HCT116 (cell line): ENCODE measurements at regions of chr22 and their contacts with region 1.

Region 1: GRCh38 chr22:41697126-41697775 is 2.1 kb upstream of the MEI1 start:
- DNase-seq: peak; percentile 68
- ATAC-seq: peak; percentile 91
- H3K4me3 ChIP-seq: no peak overlapping the region
- H3K27ac ChIP-seq: peak overlapping the region; percentile 45
- H3K4me1 ChIP-seq: peaks cover 3 to 12% of the 10 kb centered on the region in 2 experiments
- H3K27me3 ChIP-seq: no peaks in the 10 kb centered on the region
- CTCF ChIP-seq: peak; percentile 96 to 99 (median 98)
- POLR2A ChIP-seq: no peak
- RAD21 ChIP-seq: peak; percentile 95

Region 2: DNA sequence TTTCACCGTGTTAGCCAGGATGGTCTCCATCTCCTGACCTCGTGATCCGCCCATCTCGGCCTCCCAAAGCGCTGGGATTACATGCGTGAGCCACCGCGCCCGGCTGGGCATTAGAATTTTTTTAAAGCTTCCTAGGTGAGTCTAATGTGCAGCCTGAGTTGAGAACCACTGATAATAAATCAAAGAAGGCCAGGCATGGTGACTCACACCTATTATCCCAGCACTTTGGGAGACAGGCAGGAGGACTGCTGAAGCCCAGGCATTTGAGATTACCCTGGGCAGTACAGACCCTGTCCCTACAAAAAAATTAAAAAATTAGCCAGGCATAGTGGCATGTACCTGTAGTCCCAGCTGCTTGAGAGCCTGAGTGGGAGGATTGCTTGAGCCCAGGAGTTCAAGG is 15.8 kb after region 1 on chr22:
- CTCF ChIA-PET with region 1: interaction called, 16 read pairs
- POLR2A ChIA-PET with region 1: no interaction called
- RAD21 ChIA-PET with region 1: no interaction called
- intact Hi-C with region 1: no loop called
- DNase-seq: peak; percentile 21
- ATAC-seq: peak; percentile 95
- H3K4me3 ChIP-seq: peak overlapping the region in 1 of 2 experiments; percentile 16; a peak in 1 of 4 replicates
- H3K27ac ChIP-seq: no peak overlapping the region
- H3K4me1 ChIP-seq: peaks cover 9 to 11% of the 10 kb centered on the region in 2 experiments
- H3K27me3 ChIP-seq: no peaks in the 10 kb centered on the region
- CTCF ChIP-seq: no peak
- POLR2A ChIP-seq: no peak
- RAD21 ChIP-seq: no peak

Region 3: DNA sequence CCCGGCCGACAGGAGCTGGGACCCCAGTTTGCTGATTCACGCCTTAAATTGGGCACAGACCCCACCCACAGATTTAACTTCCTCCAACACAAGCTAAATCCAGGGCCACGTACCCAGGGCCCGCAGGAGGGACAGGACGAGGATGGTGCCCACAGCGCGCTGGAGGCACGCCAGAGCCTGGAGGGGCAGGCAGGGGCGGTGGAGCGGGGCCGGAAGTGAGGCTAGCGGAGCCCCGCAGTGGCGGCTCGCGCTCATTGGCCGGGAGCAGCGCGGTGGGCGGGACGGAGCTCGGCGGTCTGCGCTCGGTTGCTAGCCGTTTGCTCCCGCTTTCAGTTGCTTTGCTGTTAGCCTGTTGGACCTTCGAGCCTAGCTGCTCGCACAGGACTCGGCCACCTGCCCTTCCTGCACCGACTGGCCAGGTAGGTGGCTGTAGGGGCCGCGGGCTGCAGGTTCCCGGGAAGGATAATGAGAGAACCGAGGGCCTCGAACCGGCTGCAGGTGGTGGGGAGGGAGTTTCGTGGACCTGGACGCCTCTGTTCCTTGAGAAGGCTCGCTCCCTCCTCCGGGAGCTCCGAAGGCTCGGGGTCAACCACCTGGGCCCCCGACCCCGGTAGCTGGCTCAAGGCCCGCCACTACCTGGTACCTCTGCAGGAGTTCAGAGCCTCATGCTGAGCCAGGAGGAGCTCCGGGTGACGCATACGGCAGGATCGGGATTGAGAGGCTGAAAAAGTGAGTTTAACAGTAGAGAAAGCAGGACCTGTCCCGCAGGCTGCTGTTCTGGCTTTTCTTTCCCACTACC is 103.3 kb after region 1 on chr22 and contains the start of gene CCDC134:
- CTCF ChIA-PET with region 1: interaction called, 12 read pairs
- POLR2A ChIA-PET with region 1: interaction called, 6 read pairs
- RAD21 ChIA-PET with region 1: interaction called, 3 read pairs
- intact Hi-C with region 1: no loop called
- DNase-seq: peak; percentile 41
- ATAC-seq: peak; percentile 99
- H3K4me3 ChIP-seq: peak within 1 kb of the TSS; percentile 66 to 93
- H3K27ac ChIP-seq: peak within 1 kb of the TSS; percentile 82
- H3K4me1 ChIP-seq: peaks cover 11 to 20% of the 10 kb centered on the region in 2 experiments
- H3K27me3 ChIP-seq: no peaks in the 10 kb centered on the region
- CTCF ChIP-seq: no peak
- POLR2A ChIP-seq: peak; percentile 93
- RAD21 ChIP-seq: no peak
- total RNA-seq, gene CCDC134: 15.8 TPM

Region 4: GRCh38 chr22:41940832-41941765 is 243.8 kb after region 1 on chr22:
- CTCF ChIA-PET with region 1: interaction called, 62 read pairs
- POLR2A ChIA-PET with region 1: no interaction called
- RAD21 ChIA-PET with region 1: interaction called, 4 to 9 read pairs
- intact Hi-C with region 1: loop called (anchors 1 kb)
- DNase-seq: no peak
- ATAC-seq: peak; percentile 89
- H3K4me3 ChIP-seq: no peak overlapping the region
- H3K27ac ChIP-seq: no peak overlapping the region; the same call in 1 of the 2 replicates
- H3K4me1 ChIP-seq: peaks cover 3 to 21% of the 10 kb centered on the region in 2 experiments; a peak in 3 of 4 replicates
- H3K27me3 ChIP-seq: no peaks in the 10 kb centered on the region
- CTCF ChIP-seq: peak; percentile 81 to 87 (median 83)
- POLR2A ChIP-seq: no peak
- RAD21 ChIP-seq: peak; percentile 91